Activated T-helper 1 cell treated with anti-CD3 and anti-CD28 coated beads, Interleukin-12 subunit alpha, Interleukin-12 subunit beta, Interleukin-2, Interleukin-4 antibody, amounts not matched to agents 30 ng/mL and 10 ng/mL and 1 ng/mL, durations not matched to agents 14 hours and 24 hours and 36 hours (primary cell): ENCODE measurements at regions of chr11 and their contacts with region 1.

Region 1: GRCh38 chr11:63536669-63537292 is at the start of gene PLAAT4:
- DNase-seq: peak; percentile 41
- H3K4me3 Mint-ChIP-seq: peak within 1 kb of the TSS; percentile 86
- H3K27ac Mint-ChIP-seq: peak within 1 kb of the TSS; percentile 91
- H3K4me1 Mint-ChIP-seq: peaks cover 69% of the 10 kb centered on the region
- H3K27me3 Mint-ChIP-seq: no peaks in the 10 kb centered on the region
- total RNA-seq, gene PLAAT4: 11.8 and 12.2 TPM in 2 replicates

Region 2: DNA sequence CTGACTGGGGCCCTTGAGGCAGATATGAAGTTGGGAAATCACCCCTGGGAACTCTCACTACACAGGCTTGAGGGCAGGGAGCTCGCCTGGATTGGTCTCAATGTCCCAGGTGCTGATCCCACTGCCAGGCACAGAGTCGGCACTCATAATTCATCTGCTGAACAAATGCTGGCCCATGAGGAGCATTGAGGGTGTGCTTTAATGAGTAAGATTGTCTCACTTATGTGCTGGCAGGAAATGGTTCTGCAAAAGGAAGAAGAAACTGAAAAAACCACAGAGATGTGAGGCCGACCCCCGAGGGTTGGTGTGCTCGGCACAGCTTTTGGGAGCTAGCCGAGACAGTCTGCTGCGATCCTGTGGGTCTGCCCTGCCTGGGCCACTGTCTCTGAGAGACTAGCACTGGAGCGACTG is 17.0 kb after region 1 on chr11:
- intact Hi-C with region 1: loop called (anchors 1 kb)
- DNase-seq: peak; percentile 53
- H3K4me3 Mint-ChIP-seq: peak overlapping the region; percentile 62
- H3K27ac Mint-ChIP-seq: peak overlapping the region; percentile 88
- H3K4me1 Mint-ChIP-seq: peaks cover 35% of the 10 kb centered on the region
- H3K27me3 Mint-ChIP-seq: peaks cover 1% of the 10 kb centered on the region

Region 3: GRCh38 chr11:63614136-63614664 is 77.4 kb after region 1 on chr11 and contains the start of gene PLAAT3:
- intact Hi-C with region 1: loop called (anchors 1 kb)
- DNase-seq: peak; percentile 14
- H3K4me3 Mint-ChIP-seq: peak within 1 kb of the TSS; percentile 81
- H3K27ac Mint-ChIP-seq: no peak within 1 kb of the TSS
- H3K4me1 Mint-ChIP-seq: peaks cover 5% of the 10 kb centered on the region
- H3K27me3 Mint-ChIP-seq: peaks cover 7% of the 10 kb centered on the region
- total RNA-seq, gene PLAAT3: 2.3 TPM in 2 replicates

Region 4: GRCh38 chr11:63671322-63672155 is 134.8 kb after region 1 on chr11 and contains the start of gene ATL3:
- intact Hi-C with region 1: loop called (anchors 1 kb)
- DNase-seq: peak; percentile 91
- H3K4me3 Mint-ChIP-seq: peak within 1 kb of the TSS; percentile 92
- H3K27ac Mint-ChIP-seq: peak within 1 kb of the TSS; percentile 81
- H3K4me1 Mint-ChIP-seq: peaks cover 25% of the 10 kb centered on the region
- H3K27me3 Mint-ChIP-seq: no peaks in the 10 kb centered on the region
- total RNA-seq, gene ATL3: 35.6 and 37.0 TPM in 2 replicates

Region 5: GRCh38 chr11:64659417-64660144 is 1122.8 kb after region 1 on chr11:
- intact Hi-C with region 1: no loop called
- DNase-seq: no peak
- H3K4me3 Mint-ChIP-seq: no peak overlapping the region
- H3K27ac Mint-ChIP-seq: no peak overlapping the region
- H3K4me1 Mint-ChIP-seq: no peaks in the 10 kb centered on the region
- H3K27me3 Mint-ChIP-seq: peaks cover 1% of the 10 kb centered on the region